ENCODE measurements at regions of chr3 and their contacts with region 1.

Region 1: DNA sequence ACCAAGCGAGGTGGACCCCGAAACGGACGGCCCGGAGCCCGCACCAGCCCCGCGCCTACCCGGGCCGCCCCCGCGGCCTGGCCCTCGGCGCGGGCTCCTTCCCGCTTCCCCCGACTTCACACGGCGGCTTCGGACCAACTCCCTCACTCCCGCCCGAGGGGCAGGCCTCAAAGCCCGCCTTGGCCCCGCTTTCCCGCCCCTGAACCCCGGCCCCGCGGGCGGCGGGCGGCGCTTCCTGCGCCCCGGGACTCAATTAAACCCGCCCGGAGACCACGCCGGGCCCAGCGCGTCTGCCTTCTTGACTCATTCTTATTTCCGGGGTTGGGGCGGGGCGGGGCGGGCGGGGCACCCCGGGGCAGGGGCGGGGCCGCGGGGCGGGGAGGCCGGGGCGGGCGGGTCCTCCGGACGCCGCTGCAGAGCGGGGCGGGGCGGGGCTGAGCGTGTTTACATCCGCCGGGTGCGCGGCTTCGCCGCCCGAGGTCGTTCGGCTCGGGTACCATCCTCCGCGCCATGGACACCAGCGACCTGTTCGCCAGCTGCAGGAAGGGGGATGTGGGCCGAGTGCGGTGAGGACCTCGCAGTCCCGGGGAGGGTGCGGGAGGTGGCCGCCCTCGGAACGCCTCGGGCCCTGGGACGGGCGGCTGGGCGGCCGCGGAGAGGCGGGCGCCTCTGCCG is at the start of gene ABTB1:
- DNase-seq: peak; percentile 79 to 81
- H3K4me3 ChIP-seq: peak within 1 kb of the TSS; percentile 93 to 97 (median 95)
- H3K27ac ChIP-seq: peak within 1 kb of the TSS; percentile 78 to 80 (median 80)
- H3K4me1 ChIP-seq: peaks cover 14% of the 10 kb centered on the region in 2 donors
- H3K27me3 ChIP-seq: no peaks in the 10 kb centered on the region
- CTCF ChIP-seq: no peak
- POLR2A ChIP-seq: peak in 1 of 2 donors; percentile 63
- total RNA-seq, gene ABTB1: 18.9 to 29.1 (median 24.4) TPM

Region 2: GRCh38 chr3:127254730-127255129 is 417.9 kb before region 1 on chr3:
- intact Hi-C with region 1: no loop called
- DNase-seq: no peak
- H3K4me3 ChIP-seq: no peak overlapping the region
- H3K27ac ChIP-seq: no peak overlapping the region
- H3K4me1 ChIP-seq: no peaks in the 10 kb centered on the region
- H3K27me3 ChIP-seq: no peaks in the 10 kb centered on the region
- CTCF ChIP-seq: no peak
- POLR2A ChIP-seq: no peak

Region 3: GRCh38 chr3:127598841-127599570 is 73.6 kb before region 1 on chr3:
- intact Hi-C with region 1: loop called (anchors 5 kb)
- DNase-seq: no peak
- H3K4me3 ChIP-seq: no peak overlapping the region
- H3K27ac ChIP-seq: peak overlapping the region in 2 of 3 donors; percentile 39 to 62
- H3K4me1 ChIP-seq: peaks cover 5 to 6% of the 10 kb centered on the region in 2 donors
- H3K27me3 ChIP-seq: no peaks in the 10 kb centered on the region
- CTCF ChIP-seq: no peak
- POLR2A ChIP-seq: no peak